OCI-LY7 (cell line): ENCODE measurements at regions of chr15 and their contacts with region 1.

Region 1: DNA sequence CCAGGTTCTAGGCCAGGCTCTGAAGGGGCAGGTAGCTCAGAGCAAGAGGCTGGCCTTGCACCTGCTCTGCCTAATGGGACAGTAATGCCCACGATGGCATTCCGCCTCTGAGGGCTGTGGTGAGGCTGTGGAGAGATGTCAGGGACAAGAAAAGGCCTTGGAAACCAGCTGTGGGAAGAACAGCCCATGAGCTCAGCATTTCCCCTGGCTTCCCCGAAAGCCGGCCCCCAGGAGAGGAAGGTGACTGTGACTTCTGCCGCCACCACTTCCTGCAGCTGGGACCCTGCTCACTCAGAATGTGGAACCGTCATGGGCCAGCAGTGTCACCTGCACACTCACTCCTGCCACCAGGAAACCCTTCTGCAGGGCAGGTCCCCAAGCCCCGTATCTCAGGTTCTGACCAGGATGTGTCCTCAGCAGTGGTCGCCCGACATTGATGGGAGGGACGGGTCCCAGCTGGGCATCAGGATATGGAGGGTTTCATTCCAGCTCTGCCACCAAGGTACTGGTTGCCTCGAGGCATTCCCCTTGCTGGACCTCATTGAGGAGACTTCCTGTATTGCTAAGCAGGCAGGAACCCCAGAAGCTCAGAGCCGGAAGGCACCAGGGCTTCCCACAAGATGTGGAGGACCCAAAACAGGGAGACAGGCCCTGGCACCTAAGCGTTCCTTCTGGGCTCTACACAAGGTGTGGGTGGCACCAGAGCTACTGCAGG is 30.7 kb downstream of the SEMA7A start:
- DNase-seq: peak; percentile 89
- H3K4me3 ChIP-seq: peak overlapping the region; percentile 51
- H3K27ac ChIP-seq: peak overlapping the region; percentile 53
- H3K4me1 ChIP-seq: peaks cover 66% of the 10 kb centered on the region
- CTCF ChIP-seq: no peak

Region 2: GRCh38 chr15:74322181-74323076 is 80.6 kb before region 1 on chr15:
- CTCF ChIA-PET with region 1: interaction called, 12 read pairs
- POLR2A ChIA-PET with region 1: no interaction called
- intact Hi-C with region 1: no loop called
- DNase-seq: peak; percentile 66
- H3K4me3 ChIP-seq: no peak overlapping the region
- H3K27ac ChIP-seq: no peak overlapping the region
- H3K4me1 ChIP-seq: no peaks in the 10 kb centered on the region
- CTCF ChIP-seq: peak; percentile 91

Region 3: GRCh38 chr15:74340139-74340538 is 62.9 kb before region 1 on chr15:
- CTCF ChIA-PET with region 1: no interaction called
- POLR2A ChIA-PET with region 1: no interaction called
- intact Hi-C with region 1: no loop called
- DNase-seq: no peak
- H3K4me3 ChIP-seq: no peak overlapping the region
- H3K27ac ChIP-seq: no peak overlapping the region
- H3K4me1 ChIP-seq: no peaks in the 10 kb centered on the region
- CTCF ChIP-seq: no peak

Region 4: GRCh38 chr15:74433592-74434262 is 30.7 kb after region 1 on chr15 and contains the start of gene SEMA7A:
- CTCF ChIA-PET with region 1: interaction called, 4 read pairs
- POLR2A ChIA-PET with region 1: interaction called, 4 read pairs
- intact Hi-C with region 1: loop called (anchors 1 kb)
- DNase-seq: peak; percentile 88
- H3K4me3 ChIP-seq: peak within 1 kb of the TSS; percentile 66
- H3K27ac ChIP-seq: no peak within 1 kb of the TSS
- H3K4me1 ChIP-seq: peaks cover 33% of the 10 kb centered on the region
- CTCF ChIP-seq: no peak
- total RNA-seq, gene SEMA7A: 0.06 and 0.08 TPM in 2 replicates